PC-9 (cell line): ENCODE measurements at regions of chr3 and their contacts with region 1.

Region 1: DNA sequence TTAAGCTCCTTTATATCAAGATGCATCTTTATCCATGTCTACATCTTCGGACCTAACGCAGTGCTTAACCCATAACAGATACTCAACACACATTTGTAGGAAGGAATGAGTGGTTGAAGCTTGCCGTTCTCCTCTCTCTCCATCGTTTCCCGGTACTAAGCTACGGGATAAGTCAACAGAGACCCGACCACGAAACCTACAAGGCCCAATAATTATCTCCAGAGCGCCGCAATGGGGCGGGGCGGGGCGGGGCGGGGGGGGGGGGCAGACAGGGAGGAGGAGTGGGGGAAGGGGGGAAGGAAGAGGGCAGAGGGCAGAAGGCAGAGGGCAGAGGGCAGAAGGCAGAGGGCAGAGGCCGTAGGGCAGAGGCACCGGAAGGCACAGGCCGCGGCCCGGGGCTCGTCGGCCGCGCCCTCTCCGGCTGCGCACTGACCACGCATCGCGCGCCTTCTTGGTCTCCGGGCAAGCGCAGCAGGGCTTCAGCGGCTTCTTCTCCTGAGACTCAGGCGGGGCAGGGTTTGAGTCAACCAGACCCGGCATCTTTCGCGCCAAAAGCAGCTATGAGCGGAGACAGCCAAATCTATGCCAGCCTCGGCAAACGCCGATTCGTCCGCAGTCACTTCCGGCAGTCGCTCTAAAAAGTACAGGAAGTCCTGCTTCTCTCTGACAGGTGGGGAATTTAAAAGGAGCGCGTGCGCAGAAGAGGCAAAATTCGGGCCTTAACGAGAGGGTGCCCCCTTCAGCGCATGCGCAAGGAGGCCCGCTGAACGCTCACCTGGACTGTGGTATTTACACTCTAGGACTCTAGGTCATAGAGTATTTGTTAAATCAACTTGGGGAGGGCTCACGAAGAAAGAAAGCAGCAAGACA is at the start of gene COX17:
- DNase-seq: peak; percentile 92 to 96
- H3K4me3 ChIP-seq: peak within 1 kb of the TSS; percentile 81
- H3K27ac ChIP-seq: peak within 1 kb of the TSS; percentile 59
- H3K4me1 ChIP-seq: peaks cover 15% of the 10 kb centered on the region
- H3K27me3 ChIP-seq: no peaks in the 10 kb centered on the region
- CTCF ChIP-seq: no peak
- total RNA-seq, gene COX17: 57.6 and 61.4 TPM in 2 replicates

Region 2: DNA sequence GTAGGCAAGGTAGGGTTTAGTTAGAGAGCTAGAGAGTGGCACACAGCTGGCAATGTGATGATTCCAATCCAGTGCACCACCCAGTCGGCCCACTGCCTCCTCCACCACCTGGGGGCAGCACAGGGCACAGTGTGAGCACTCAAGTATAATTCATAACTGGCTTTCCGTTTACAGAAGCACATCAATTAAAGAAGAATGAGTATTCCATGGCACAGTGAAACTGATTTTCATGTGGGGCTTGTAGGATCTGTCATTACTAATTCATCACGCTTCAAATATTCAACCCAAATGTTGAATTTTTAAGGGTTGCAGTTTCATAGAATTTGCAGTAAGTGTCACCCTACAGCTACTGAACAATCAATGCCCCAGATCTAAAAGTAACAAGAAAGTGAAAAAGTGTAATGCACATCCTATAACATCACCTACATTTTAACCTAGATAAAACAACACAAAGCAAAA is 792.2 kb before region 1 on chr3:
- CTCF ChIA-PET with region 1: no interaction called
- POLR2A ChIA-PET with region 1: no interaction called
- intact Hi-C with region 1: loop called (anchors 1 kb)
- DNase-seq: peak in 1 of 2 experiments; percentile 66
- H3K4me3 ChIP-seq: no peak overlapping the region
- H3K27ac ChIP-seq: no peak overlapping the region
- H3K4me1 ChIP-seq: no peaks in the 10 kb centered on the region
- H3K27me3 ChIP-seq: no peaks in the 10 kb centered on the region
- CTCF ChIP-seq: peak; percentile 83

Region 3: GRCh38 chr3:119098619-119099222 is 578.3 kb before region 1 on chr3:
- CTCF ChIA-PET with region 1: no interaction called
- POLR2A ChIA-PET with region 1: no interaction called
- intact Hi-C with region 1: loop called (anchors 2 kb)
- DNase-seq: peak in 1 of 2 experiments; percentile 14
- H3K4me3 ChIP-seq: no peak overlapping the region
- H3K27ac ChIP-seq: no peak overlapping the region
- H3K4me1 ChIP-seq: no peaks in the 10 kb centered on the region
- H3K27me3 ChIP-seq: no peaks in the 10 kb centered on the region
- CTCF ChIP-seq: peak; percentile 83

Region 4: GRCh38 chr3:119352849-119353502 is 324.0 kb before region 1 on chr3:
- CTCF ChIA-PET with region 1: no interaction called
- POLR2A ChIA-PET with region 1: no interaction called
- intact Hi-C with region 1: no loop called
- DNase-seq: peak in 1 of 2 experiments; percentile 66
- H3K4me3 ChIP-seq: peak overlapping the region; percentile 24; the same call in 1 of the 2 replicates
- H3K27ac ChIP-seq: peak overlapping the region; percentile 78
- H3K4me1 ChIP-seq: peaks cover 21% of the 10 kb centered on the region
- H3K27me3 ChIP-seq: no peaks in the 10 kb centered on the region
- CTCF ChIP-seq: peak; percentile 53

Region 5: GRCh38 chr3:119463171-119464169 is 213.5 kb before region 1 on chr3 and contains the start of gene TMEM39A:
- CTCF ChIA-PET with region 1: no interaction called
- POLR2A ChIA-PET with region 1: interaction called, 6 read pairs
- intact Hi-C with region 1: loop called (anchors 1 kb)
- DNase-seq: peak; percentile 92 to 99
- H3K4me3 ChIP-seq: peak within 1 kb of the TSS; percentile 87
- H3K27ac ChIP-seq: peak within 1 kb of the TSS; percentile 56
- H3K4me1 ChIP-seq: peaks cover 17% of the 10 kb centered on the region
- H3K27me3 ChIP-seq: no peaks in the 10 kb centered on the region
- CTCF ChIP-seq: peak; percentile 40; the same call in 1 of the 2 replicates
- total RNA-seq, gene TMEM39A: 46.8 and 51.7 TPM in 2 replicates

Region 6: GRCh38 chr3:119524931-119525662 is 151.9 kb before region 1 on chr3:
- CTCF ChIA-PET with region 1: no interaction called
- POLR2A ChIA-PET with region 1: no interaction called
- intact Hi-C with region 1: loop called (anchors 10 kb)
- DNase-seq: no peak
- H3K4me3 ChIP-seq: no peak overlapping the region
- H3K27ac ChIP-seq: no peak overlapping the region
- H3K4me1 ChIP-seq: no peaks in the 10 kb centered on the region
- H3K27me3 ChIP-seq: no peaks in the 10 kb centered on the region
- CTCF ChIP-seq: peak; percentile 42; the same call in 1 of the 2 replicates

Region 7: DNA sequence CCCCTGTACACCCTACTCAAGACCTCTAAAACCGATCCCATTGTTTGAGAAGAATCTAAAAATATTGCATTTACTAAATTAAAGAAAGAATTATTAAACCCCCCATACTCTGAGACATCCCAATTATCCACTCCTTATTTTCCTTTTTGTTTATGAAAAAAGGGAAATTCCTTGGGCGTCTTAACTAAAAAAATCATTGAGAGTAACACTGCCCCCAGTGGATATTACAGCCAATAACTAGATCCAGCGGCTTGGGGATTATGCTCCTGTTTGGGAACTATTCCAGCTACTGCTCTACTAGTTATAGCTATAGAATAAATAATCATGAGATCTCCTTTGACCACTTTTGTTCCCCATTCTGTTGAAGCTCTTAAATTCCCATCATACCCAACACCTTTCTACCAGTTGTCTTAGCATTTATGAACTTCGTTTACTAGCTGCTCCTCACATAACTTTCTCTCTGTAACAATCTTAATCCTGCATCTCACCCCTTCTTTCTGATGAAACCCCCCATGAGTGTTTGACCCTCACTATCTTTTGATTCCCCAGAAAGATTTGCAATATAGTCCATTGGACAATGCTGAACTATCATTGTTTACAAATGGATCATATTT is 13.1 kb after region 1 on chr3:
- CTCF ChIA-PET with region 1: no interaction called
- POLR2A ChIA-PET with region 1: interaction called, 17 read pairs
- intact Hi-C with region 1: no loop called
- DNase-seq: no peak
- H3K4me3 ChIP-seq: no peak overlapping the region
- H3K27ac ChIP-seq: no peak overlapping the region
- H3K4me1 ChIP-seq: no peaks in the 10 kb centered on the region
- H3K27me3 ChIP-seq: no peaks in the 10 kb centered on the region
- CTCF ChIP-seq: peak; percentile 69